ENCODE measurements at regions of chr13 and their contacts with region 1.

Region 1: GRCh38 chr13:85828149-85828548 is 28.9 kb upstream of the SLITRK6 start:
- DNase-seq: peak; percentile 6
- ATAC-seq: no peak
- H3K4me3 ChIP-seq: no peak overlapping the region
- H3K27ac ChIP-seq: no peak overlapping the region
- H3K4me1 ChIP-seq: no peaks in the 10 kb centered on the region
- H3K27me3 ChIP-seq: no peaks in the 10 kb centered on the region
- CTCF ChIP-seq: peak; percentile 34
- EP300 ChIP-seq: no peak
- POLR2A ChIP-seq: no peak
- RAD21 ChIP-seq: no peak

Region 2: GRCh38 chr13:84896128-84896527 is 932.0 kb before region 1 on chr13:
- CTCF ChIA-PET with region 1: interaction called, 21 read pairs
- POLR2A ChIA-PET with region 1: no interaction called
- in situ Hi-C with region 1: no loop called
- intact Hi-C with region 1: loop called (anchors 1 kb)
- DNase-seq: peak; percentile 52
- ATAC-seq: peak; percentile 70
- H3K4me3 ChIP-seq: no peak overlapping the region
- H3K27ac ChIP-seq: no peak overlapping the region
- H3K4me1 ChIP-seq: no peaks in the 10 kb centered on the region
- H3K27me3 ChIP-seq: peaks cover 0 to 6% of the 10 kb centered on the region in 2 experiments; a peak in 2 of 5 replicates
- CTCF ChIP-seq: peak; percentile 69
- EP300 ChIP-seq: no peak
- POLR2A ChIP-seq: no peak
- RAD21 ChIP-seq: 0 out of 2 replicates have a peak, but pooled peaks have one; percentile 25

Region 3: DNA sequence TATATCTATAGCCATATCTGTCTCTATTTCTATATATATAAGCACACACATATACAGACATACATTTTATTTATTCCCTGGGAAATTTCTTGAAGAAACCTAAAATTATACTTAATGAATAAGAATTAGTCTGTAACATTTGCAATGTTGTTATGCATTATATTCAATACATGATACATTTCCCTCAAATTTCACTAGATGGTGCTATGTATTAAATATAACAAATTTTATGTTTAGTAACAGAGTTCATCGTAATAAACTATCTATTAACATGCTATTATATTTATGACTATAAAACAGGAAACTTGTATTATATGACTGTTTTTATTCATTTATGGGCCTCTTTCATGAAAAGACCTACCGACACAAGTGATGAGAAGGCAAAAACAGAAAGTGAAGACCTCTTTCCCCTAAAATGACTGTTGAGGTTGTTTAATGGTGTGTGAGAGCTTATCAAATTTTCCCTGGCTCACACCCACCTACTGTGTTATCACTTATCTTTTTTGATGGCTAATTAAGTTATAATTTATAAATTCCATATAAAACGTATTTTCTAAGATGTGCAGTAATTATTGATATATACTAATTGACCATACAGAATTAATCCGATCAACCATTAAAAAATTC is 910.8 kb before region 1 on chr13:
- CTCF ChIA-PET with region 1: interaction called, 3 read pairs
- POLR2A ChIA-PET with region 1: no interaction called
- in situ Hi-C with region 1: no loop called
- intact Hi-C with region 1: loop called (anchors 5 kb)
- DNase-seq: peak; percentile 8
- ATAC-seq: no peak
- H3K4me3 ChIP-seq: no peak overlapping the region
- H3K27ac ChIP-seq: no peak overlapping the region
- H3K4me1 ChIP-seq: no peaks in the 10 kb centered on the region
- H3K27me3 ChIP-seq: no peaks in the 10 kb centered on the region
- CTCF ChIP-seq: no peak
- EP300 ChIP-seq: no peak
- POLR2A ChIP-seq: no peak
- RAD21 ChIP-seq: no peak

Region 4: GRCh38 chr13:84973661-84974060 is 854.5 kb before region 1 on chr13:
- CTCF ChIA-PET with region 1: no interaction called
- POLR2A ChIA-PET with region 1: no interaction called
- in situ Hi-C with region 1: no loop called
- intact Hi-C with region 1: no loop called
- DNase-seq: no peak
- ATAC-seq: no peak
- H3K4me3 ChIP-seq: no peak overlapping the region
- H3K27ac ChIP-seq: no peak overlapping the region
- H3K4me1 ChIP-seq: no peaks in the 10 kb centered on the region
- H3K27me3 ChIP-seq: no peaks in the 10 kb centered on the region
- CTCF ChIP-seq: no peak
- EP300 ChIP-seq: no peak
- POLR2A ChIP-seq: no peak
- RAD21 ChIP-seq: no peak

Measured in HepG2 (cell line).